ENCODE measurements at regions of chr3 and their contacts with region 1.

Region 1: GRCh38 chr3:176428552-176428951 is 768.7 kb downstream of the TBL1XR1 start:
- DNase-seq: no peak

Region 2: GRCh38 chr3:175957002-175957401 is 471.6 kb before region 1 on chr3:
- intact Hi-C with region 1: loop called (anchors 5 kb)
- DNase-seq: no peak

Measured in posterior cingulate gyrus (tissue), 11 donors.